CD8-positive, alpha-beta T cell (primary cell): ENCODE measurements at regions of chr19 and their contacts with region 1.

Region 1: GRCh38 chr19:5048091-5048726 is 79.3 kb downstream of the KDM4B start:
- DNase-seq: peak; percentile 30 to 79 (median 52)
- ATAC-seq: peak; percentile 88
- H3K4me3 ChIP-seq: no peak overlapping the region
- H3K4me3 Mint-ChIP-seq: no peak overlapping the region
- H3K27ac ChIP-seq: no peak overlapping the region
- H3K27ac Mint-ChIP-seq: no peak overlapping the region
- H3K4me1 ChIP-seq: peaks cover 5% of the 10 kb centered on the region
- H3K4me1 Mint-ChIP-seq: peaks cover 3% of the 10 kb centered on the region
- H3K27me3 ChIP-seq: no peaks in the 10 kb centered on the region
- H3K27me3 Mint-ChIP-seq: no peaks in the 10 kb centered on the region
- CTCF ChIP-seq: peak; percentile 92

Region 2: GRCh38 chr19:4723367-4724187 is 324.6 kb before region 1 on chr19 and contains the start of gene DPP9:
- CTCF ChIA-PET with region 1: no interaction called
- POLR2A ChIA-PET with region 1: no interaction called
- intact Hi-C with region 1: no loop called
- DNase-seq: peak; percentile 93 to 99 (median 96)
- ATAC-seq: peak; percentile 94
- H3K4me3 ChIP-seq: peak within 1 kb of the TSS; percentile 76 to 78
- H3K4me3 Mint-ChIP-seq: peak within 1 kb of the TSS; percentile 93
- H3K27ac ChIP-seq: peak within 1 kb of the TSS; percentile 78 to 79
- H3K27ac Mint-ChIP-seq: peak within 1 kb of the TSS; percentile 97
- H3K4me1 ChIP-seq: peaks cover 31% of the 10 kb centered on the region
- H3K4me1 Mint-ChIP-seq: peaks cover 32% of the 10 kb centered on the region
- H3K27me3 ChIP-seq: no peaks in the 10 kb centered on the region
- H3K27me3 Mint-ChIP-seq: no peaks in the 10 kb centered on the region
- CTCF ChIP-seq: no peak
- total RNA-seq, gene DPP9: 85.5 to 86.6 TPM

Region 3: GRCh38 chr19:5147978-5148793 is 100.0 kb after region 1 on chr19:
- CTCF ChIA-PET with region 1: interaction called, 10 read pairs
- POLR2A ChIA-PET with region 1: no interaction called
- intact Hi-C with region 1: no loop called
- DNase-seq: peak in 4 of 9 experiments; percentile 4 to 22 (median 8)
- ATAC-seq: no peak
- H3K4me3 ChIP-seq: no peak overlapping the region
- H3K4me3 Mint-ChIP-seq: no peak overlapping the region
- H3K27ac ChIP-seq: no peak overlapping the region
- H3K27ac Mint-ChIP-seq: no peak overlapping the region
- H3K4me1 ChIP-seq: peaks cover 5% of the 10 kb centered on the region
- H3K4me1 Mint-ChIP-seq: peaks cover 8% of the 10 kb centered on the region
- H3K27me3 ChIP-seq: no peaks in the 10 kb centered on the region
- H3K27me3 Mint-ChIP-seq: no peaks in the 10 kb centered on the region
- CTCF ChIP-seq: no peak

Region 4: DNA sequence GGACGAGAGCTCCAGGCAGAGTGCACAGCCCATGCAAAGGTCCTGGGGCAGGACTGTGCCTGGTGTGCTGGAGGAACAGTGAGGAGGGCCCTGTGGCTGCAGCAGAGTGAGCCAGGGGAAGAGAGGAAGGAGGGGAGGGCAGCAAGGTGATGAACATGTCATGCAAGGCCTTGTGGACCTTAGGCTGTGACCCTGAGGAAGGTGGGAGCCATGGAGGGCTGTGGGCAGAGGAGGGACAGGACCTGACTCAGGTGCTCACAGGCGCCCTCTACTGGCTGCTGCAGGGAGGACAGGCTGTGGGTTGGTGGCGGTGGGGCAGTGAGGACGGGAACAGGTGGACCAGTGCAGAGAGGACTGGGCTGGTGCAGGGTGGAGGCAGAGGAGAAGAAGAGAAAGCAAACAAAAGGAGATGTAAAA is 122.1 kb after region 1 on chr19:
- CTCF ChIA-PET with region 1: interaction called, 36 read pairs
- POLR2A ChIA-PET with region 1: no interaction called
- intact Hi-C with region 1: no loop called
- DNase-seq: peak; percentile 18 to 74 (median 51)
- ATAC-seq: peak; percentile 42
- H3K4me3 ChIP-seq: no peak overlapping the region
- H3K4me3 Mint-ChIP-seq: no peak overlapping the region
- H3K27ac ChIP-seq: no peak overlapping the region
- H3K27ac Mint-ChIP-seq: no peak overlapping the region
- H3K4me1 ChIP-seq: no peaks in the 10 kb centered on the region
- H3K4me1 Mint-ChIP-seq: peaks cover 2% of the 10 kb centered on the region
- H3K27me3 ChIP-seq: no peaks in the 10 kb centered on the region
- H3K27me3 Mint-ChIP-seq: no peaks in the 10 kb centered on the region
- CTCF ChIP-seq: peak; percentile 47

Region 5: DNA sequence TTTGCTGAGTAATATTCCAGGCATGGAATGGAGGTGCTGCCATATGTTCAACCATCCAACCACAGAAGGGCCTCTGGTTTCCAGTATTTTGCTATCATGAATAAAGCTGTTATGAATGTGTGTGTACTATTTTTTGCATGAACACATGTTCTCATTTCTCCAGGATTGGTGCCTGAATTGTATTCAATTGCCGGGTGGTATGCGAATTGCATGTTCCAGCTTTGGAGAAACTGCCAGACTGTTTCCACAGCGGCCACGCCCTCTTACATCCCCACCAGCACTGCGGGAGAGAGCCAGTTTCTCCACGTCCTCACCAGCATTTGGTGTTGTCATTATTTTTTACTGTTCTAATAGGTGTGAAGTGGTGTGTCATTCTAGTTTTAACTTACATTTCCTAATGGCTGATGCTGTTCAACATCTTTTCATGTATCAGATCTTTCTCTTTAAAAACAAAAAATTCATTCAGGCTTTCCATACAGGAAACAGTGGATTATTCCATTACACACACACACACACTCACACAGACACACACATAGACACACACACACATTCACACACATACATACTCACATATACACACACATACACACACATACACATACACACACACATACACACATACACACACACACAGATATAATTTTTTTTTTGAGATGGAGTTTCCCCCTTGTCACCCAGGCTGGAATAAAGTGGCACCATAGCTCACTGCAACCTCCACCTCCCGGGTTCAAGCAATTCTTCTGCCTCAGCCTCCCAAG is 138.3 kb after region 1 on chr19:
- CTCF ChIA-PET with region 1: no interaction called
- POLR2A ChIA-PET with region 1: no interaction called
- intact Hi-C with region 1: no loop called
- DNase-seq: no peak
- ATAC-seq: no peak
- H3K4me3 ChIP-seq: no peak overlapping the region
- H3K4me3 Mint-ChIP-seq: no peak overlapping the region
- H3K27ac ChIP-seq: no peak overlapping the region
- H3K27ac Mint-ChIP-seq: no peak overlapping the region
- H3K4me1 ChIP-seq: no peaks in the 10 kb centered on the region
- H3K4me1 Mint-ChIP-seq: no peaks in the 10 kb centered on the region
- H3K27me3 ChIP-seq: no peaks in the 10 kb centered on the region
- H3K27me3 Mint-ChIP-seq: peaks cover 8% of the 10 kb centered on the region
- CTCF ChIP-seq: no peak

Region 6: DNA sequence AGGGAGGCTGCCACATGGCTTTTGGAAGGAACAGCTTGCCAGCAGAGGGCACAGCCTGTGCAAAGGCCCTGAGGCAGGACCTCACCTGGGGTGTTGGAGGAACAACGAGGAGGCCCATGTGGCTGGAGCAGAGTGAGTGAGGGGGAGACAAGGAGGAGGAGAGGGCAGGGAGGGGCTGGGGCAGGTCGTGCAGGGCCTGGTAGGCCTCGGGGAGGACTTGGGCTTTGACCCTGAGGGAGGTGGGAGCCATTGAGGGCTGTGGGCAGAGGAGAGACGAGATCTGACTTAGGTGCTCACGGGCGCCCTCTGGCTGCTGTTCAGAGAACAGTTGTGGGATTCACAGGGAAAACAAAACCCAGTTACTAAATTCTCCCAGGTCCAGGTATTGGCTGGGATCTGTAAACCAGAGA is 432.2 kb after region 1 on chr19:
- CTCF ChIA-PET with region 1: interaction called, 3 read pairs
- POLR2A ChIA-PET with region 1: no interaction called
- intact Hi-C with region 1: loop called in 1 of 2 experiments (anchors 1 kb)
- DNase-seq: peak in 6 of 9 experiments; percentile 10 to 52 (median 41)
- ATAC-seq: no peak
- H3K4me3 ChIP-seq: no peak overlapping the region
- H3K4me3 Mint-ChIP-seq: no peak overlapping the region
- H3K27ac ChIP-seq: no peak overlapping the region
- H3K27ac Mint-ChIP-seq: no peak overlapping the region
- H3K4me1 ChIP-seq: no peaks in the 10 kb centered on the region
- H3K4me1 Mint-ChIP-seq: no peaks in the 10 kb centered on the region
- H3K27me3 ChIP-seq: no peaks in the 10 kb centered on the region
- H3K27me3 Mint-ChIP-seq: peaks cover 36% of the 10 kb centered on the region
- CTCF ChIP-seq: peak; percentile 37

Region 7: DNA sequence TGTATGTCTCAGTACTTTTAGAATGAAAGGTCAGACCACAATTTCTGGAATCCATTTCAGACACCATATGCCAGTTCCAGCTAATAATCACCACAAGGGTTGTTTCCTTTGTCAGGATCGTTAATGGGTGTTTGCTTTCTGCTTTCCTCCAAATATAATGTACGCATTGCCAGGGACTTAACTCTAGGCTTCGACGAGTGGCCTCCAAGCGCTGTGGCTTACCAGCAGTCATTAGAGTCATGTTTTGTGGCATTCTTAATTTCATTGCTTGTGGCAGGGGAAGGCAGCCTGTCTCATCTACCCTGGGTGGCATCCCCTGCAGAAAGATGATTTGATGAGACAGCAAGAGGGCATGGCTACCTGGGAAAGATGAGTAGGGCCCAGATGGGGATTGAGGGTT is 597.2 kb after region 1 on chr19:
- CTCF ChIA-PET with region 1: no interaction called
- POLR2A ChIA-PET with region 1: no interaction called
- intact Hi-C with region 1: loop called in 1 of 2 experiments (anchors 5 kb)
- DNase-seq: no peak
- ATAC-seq: no peak
- H3K4me3 ChIP-seq: no peak overlapping the region
- H3K4me3 Mint-ChIP-seq: no peak overlapping the region
- H3K27ac ChIP-seq: no peak overlapping the region
- H3K27ac Mint-ChIP-seq: no peak overlapping the region
- H3K4me1 ChIP-seq: no peaks in the 10 kb centered on the region
- H3K4me1 Mint-ChIP-seq: peaks cover 29% of the 10 kb centered on the region
- H3K27me3 ChIP-seq: no peaks in the 10 kb centered on the region
- H3K27me3 Mint-ChIP-seq: no peaks in the 10 kb centered on the region
- CTCF ChIP-seq: no peak

Region 8: GRCh38 chr19:5947435-5947834 is 899.2 kb after region 1 on chr19:
- CTCF ChIA-PET with region 1: no interaction called
- POLR2A ChIA-PET with region 1: no interaction called
- intact Hi-C with region 1: no loop called
- DNase-seq: no peak
- ATAC-seq: no peak
- H3K4me3 ChIP-seq: no peak overlapping the region
- H3K4me3 Mint-ChIP-seq: no peak overlapping the region
- H3K27ac ChIP-seq: no peak overlapping the region
- H3K27ac Mint-ChIP-seq: peak overlapping the region; percentile 88
- H3K4me1 ChIP-seq: peaks cover 67% of the 10 kb centered on the region
- H3K4me1 Mint-ChIP-seq: peaks cover 79% of the 10 kb centered on the region
- H3K27me3 ChIP-seq: no peaks in the 10 kb centered on the region
- H3K27me3 Mint-ChIP-seq: no peaks in the 10 kb centered on the region
- CTCF ChIP-seq: no peak